Activated naive CD4-positive, alpha-beta T cell treated with anti-CD3 and anti-CD28 coated beads for 36 hours (primary cell): ENCODE measurements at regions of chr10 and their contacts with region 1.

Region 1: GRCh38 chr10:31318854-31319601 is at the start of gene ZEB1:
- DNase-seq: peak; percentile 96
- H3K4me3 Mint-ChIP-seq: peak within 1 kb of the TSS; percentile 98
- H3K27ac Mint-ChIP-seq: peak within 1 kb of the TSS; percentile 99
- H3K4me1 Mint-ChIP-seq: peaks cover 33% of the 10 kb centered on the region
- H3K27me3 Mint-ChIP-seq: no peaks in the 10 kb centered on the region
- total RNA-seq, gene ZEB1: 24.8 to 29.1 TPM

Region 2: DNA sequence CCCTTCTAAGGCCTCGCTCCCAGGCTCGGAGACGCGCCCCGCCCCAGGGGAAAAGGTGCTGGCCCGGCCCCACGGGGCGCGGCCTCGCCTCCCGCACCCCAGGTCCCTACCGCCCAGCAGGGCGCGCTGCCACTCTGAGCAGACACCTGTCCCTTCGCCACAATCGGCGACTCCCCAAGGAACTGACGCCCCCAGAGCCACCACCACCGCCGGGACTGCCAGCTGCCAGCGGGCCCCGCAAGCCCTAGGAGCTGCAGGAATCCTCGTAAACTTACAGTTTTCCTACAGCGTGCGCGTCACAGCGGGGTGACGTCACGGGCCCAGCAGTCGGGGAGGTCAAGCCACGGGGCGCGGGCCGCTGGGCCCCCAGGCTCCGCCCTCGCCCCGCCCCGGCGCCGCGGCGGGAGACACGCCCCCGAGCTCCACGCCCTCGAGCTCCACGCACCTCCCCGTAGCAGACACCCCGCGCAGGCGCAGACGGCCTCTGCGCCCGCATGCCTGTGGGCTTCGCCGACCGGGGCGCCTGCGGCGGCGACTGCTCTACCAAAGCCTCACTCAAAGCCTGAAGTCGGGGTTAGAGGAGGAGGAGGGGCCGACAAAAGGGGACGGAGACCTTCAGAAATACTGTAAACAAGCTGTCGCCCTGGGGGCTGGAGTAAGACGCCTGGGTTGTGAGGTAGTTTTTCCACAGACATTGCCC is 287.3 kb before region 1 on chr10 and contains the start of gene ZNF438:
- CTCF ChIA-PET with region 1: interaction called, 3 read pairs
- intact Hi-C with region 1: loop called (anchors 1 kb)
- DNase-seq: peak; percentile 93
- H3K4me3 Mint-ChIP-seq: peak within 1 kb of the TSS; percentile 86
- H3K27ac Mint-ChIP-seq: peak within 1 kb of the TSS; percentile 98
- H3K4me1 Mint-ChIP-seq: peaks cover 16% of the 10 kb centered on the region
- H3K27me3 Mint-ChIP-seq: no peaks in the 10 kb centered on the region
- total RNA-seq, gene ZNF438: 2.4 to 2.6 TPM

Region 3: DNA sequence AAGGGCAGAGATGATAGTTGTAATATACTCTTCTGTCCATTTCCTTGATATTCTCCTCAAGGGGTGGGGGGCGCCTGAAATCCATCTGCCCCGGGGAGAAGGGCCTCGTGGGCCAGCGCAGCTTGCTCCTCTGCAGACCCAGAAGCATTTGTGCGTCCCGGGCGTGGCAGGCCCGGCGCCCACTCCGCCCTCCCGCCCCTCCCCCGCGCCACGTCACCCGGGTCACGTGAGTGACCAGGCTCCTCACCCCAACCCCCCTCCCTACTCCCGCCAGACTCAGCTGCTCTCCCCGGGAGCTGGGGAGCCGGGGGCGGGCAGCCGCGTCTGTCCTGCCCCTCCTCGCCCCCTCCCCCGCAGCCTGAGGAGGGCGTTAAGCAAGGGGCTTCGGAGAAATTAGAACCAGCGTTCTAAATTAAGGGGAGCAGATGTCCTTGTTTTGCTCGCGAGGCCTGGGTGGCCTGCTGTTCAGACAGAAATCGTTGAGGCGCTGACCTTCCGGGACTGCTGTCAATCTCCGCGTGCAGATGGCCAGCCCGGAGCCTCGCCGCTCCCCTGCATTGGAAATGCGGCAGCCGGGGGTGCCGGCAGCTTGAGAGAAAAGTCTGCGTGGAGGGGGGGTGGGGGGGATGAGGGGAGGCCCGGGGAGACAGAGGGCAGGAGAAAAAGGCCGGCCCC is 185.3 kb before region 1 on chr10:
- CTCF ChIA-PET with region 1: no interaction called
- intact Hi-C with region 1: loop called (anchors 2 kb)
- DNase-seq: peak; percentile 76
- H3K4me3 Mint-ChIP-seq: peak overlapping the region; percentile 68
- H3K27ac Mint-ChIP-seq: no peak overlapping the region
- H3K4me1 Mint-ChIP-seq: peaks cover 37% of the 10 kb centered on the region
- H3K27me3 Mint-ChIP-seq: no peaks in the 10 kb centered on the region

Region 4: DNA sequence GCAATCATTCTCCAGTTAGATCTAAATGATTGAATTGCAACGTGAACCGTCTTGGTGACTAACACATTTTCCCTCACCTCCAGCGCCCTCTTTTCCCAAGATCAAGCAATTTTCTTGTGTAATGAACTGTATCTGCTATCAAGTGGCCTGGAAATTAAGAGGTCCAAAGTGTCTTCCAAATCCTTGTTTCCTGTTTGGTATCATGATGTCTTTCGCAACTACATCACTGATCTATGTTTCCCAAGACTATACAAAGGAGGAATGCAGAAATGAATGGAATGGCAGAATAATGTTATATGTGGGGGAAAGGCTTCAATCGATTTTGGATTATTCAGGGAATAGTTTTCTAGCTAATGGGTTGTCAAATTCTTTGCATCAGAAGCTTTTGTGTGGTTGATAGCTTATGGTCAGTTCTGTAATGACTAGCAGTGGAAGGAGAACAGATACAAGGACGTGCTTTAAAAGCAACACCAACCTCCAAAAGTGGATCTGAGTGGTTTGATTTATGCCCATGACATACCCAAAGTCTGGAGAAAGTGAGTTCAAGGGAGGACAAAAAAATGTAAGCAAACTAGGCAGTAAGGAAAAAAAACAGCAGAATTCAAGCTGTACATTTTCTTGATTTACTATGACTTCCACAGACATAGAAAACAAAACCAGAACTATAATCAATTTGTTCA is 14.6 kb before region 1 on chr10:
- CTCF ChIA-PET with region 1: no interaction called
- intact Hi-C with region 1: no loop called
- DNase-seq: no peak
- H3K4me3 Mint-ChIP-seq: no peak overlapping the region
- H3K27ac Mint-ChIP-seq: no peak overlapping the region
- H3K4me1 Mint-ChIP-seq: no peaks in the 10 kb centered on the region
- H3K27me3 Mint-ChIP-seq: peaks cover 4% of the 10 kb centered on the region

Region 5: DNA sequence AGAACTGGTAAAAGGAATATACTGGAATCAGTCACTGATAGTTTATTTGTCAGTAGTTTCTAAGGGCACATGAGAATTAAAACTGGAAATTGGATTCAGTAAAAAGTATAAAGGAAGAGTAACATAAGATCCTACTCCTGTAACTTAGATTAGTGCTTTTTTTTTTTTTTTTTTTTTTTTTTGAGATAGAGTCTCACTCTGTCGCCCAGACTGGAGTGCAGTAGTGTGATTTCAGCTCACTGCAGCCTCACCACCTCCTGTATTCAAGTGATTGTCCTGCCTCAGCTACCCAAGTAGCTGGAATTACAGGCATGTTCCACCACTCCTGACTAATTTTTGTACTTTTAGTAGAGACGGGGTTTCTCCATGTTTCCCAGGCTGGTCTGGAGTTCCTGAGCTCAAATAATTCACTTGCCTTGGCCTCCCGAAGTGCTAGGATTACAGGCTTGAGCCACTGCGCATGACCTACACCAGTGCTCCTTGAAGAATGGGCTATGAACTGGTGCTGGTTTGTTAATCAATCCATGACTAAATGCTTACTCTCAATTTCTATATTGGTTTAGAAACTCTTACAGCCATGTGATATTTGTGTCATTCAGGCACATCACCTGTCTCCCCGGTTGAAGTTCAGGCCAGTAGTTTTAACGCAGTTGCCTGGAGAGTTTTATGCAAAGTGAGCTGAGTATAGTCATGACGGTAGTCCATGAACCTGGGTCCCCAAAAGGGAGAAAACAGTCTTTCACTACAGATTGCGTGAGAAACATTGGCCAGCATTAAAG is 65.0 kb after region 1 on chr10:
- CTCF ChIA-PET with region 1: no interaction called
- intact Hi-C with region 1: loop called (anchors 5 kb)
- DNase-seq: no peak
- H3K4me3 Mint-ChIP-seq: no peak overlapping the region
- H3K27ac Mint-ChIP-seq: no peak overlapping the region
- H3K4me1 Mint-ChIP-seq: peaks cover 31% of the 10 kb centered on the region
- H3K27me3 Mint-ChIP-seq: no peaks in the 10 kb centered on the region

Region 6: GRCh38 chr10:31603235-31604087 is 284.4 kb after region 1 on chr10:
- CTCF ChIA-PET with region 1: no interaction called
- intact Hi-C with region 1: loop called (anchors 2 kb)
- DNase-seq: peak; percentile 92
- H3K4me3 Mint-ChIP-seq: peak overlapping the region; percentile 86
- H3K27ac Mint-ChIP-seq: peak overlapping the region; percentile 58
- H3K4me1 Mint-ChIP-seq: peaks cover 31% of the 10 kb centered on the region
- H3K27me3 Mint-ChIP-seq: peaks cover 2% of the 10 kb centered on the region

Region 7: DNA sequence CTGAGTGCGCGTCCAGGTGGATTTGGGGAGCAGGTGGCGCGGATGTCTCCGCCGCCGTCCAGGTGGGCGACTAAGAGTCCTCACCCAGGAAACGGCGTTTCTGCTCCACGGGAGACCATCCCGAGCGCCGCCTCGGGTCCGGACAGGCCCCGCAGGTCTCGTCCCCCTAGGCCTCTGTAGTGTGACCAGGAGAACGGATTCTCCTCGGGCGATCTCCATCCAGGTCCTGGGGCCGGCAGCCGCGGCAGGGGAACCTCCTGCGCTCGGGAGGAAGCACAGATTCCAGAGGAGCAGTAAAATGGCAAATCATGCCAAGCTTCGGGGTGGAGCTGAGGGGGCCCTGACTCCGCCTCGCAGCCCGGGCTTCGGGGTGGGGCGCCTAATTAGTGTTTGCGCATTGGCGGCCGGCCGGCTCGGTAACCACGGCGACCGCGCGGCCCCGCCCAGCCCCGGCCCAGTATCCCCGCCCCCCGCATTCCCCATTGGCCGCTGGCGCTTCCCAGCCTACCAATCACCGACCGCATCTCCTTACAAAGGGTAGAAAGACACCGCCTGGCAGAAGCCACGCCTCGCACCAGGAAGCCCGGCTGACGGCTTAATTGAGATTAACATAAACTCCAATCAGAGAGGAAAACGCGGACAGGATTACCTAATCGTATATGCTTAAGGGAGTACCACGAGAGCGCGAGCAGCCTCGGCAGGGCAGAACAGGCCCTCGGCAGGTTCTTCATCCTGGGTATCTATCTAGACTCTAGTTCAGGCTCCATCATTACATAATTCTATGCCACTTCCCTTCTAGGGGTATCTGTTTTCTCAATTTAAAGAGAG is 441.0 kb after region 1 on chr10:
- CTCF ChIA-PET with region 1: no interaction called
- intact Hi-C with region 1: loop called (anchors 1 kb)
- DNase-seq: peak; percentile 96
- H3K4me3 Mint-ChIP-seq: peak overlapping the region; percentile 94
- H3K27ac Mint-ChIP-seq: peak overlapping the region; percentile 95
- H3K4me1 Mint-ChIP-seq: peaks cover 18% of the 10 kb centered on the region
- H3K27me3 Mint-ChIP-seq: no peaks in the 10 kb centered on the region